ENCODE measurements at regions of chr12 and their contacts with region 1.

Region 1: DNA sequence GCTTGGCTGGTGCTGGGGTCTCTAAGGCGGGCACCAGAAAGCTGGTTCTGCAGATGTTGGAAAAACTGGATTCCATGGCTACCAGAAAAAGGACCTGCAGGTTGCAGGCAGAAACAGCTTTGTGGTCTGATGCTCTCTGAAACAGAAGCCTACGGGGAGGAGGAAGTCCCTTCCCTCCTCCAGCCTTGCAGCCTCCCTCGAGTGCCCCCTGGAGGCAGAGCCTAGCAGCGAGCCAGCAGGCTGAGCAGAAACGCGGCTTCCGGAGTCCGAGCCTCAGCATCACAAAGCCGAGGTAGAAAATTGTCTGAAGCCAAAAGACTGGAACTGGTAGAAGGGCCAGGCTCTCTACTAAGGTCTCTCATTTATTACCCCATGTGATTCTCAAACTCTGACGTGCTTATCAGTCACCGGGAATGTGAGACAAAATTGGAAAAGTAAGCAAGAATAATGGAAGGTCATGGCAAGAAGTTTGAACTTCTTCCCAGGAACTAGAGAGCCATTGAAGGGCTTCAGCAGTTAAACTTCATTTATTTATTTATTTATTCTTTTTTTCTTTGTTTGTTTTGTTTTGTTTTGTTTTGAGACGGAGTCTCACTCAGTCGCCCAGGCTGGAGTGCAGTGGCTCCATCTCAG is 82.2 kb upstream of the CPSF6 start:
- DNase-seq: no peak
- H3K4me3 ChIP-seq: no peak overlapping the region
- H3K27me3 ChIP-seq: no peaks in the 10 kb centered on the region; the same call in 1 of the 2 replicates
- CTCF ChIP-seq: peak; percentile 99

Region 2: DNA sequence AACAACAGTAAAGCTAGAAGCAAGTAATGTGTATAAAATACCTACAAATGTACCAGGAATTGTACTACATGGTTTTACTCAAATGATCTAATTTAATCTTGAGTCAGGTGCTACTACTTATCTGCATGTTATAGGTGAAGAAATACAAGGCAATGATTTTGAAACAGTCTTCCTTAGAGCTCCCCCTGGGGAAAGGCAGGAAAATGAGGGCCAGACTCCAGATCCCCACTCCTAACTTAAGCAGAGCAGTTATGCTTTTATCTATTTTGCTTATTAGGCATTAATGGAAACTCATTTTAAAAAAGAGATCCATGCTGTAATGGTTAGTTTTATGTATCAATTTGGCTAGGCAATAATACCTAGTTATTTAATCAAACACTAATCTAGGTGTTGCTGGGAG is 27.1 kb before region 1 on chr12:
- CTCF ChIA-PET with region 1: interaction called, 19 read pairs
- POLR2A ChIA-PET with region 1: no interaction called
- DNase-seq: no peak
- H3K4me3 ChIP-seq: no peak overlapping the region
- H3K27me3 ChIP-seq: peaks cover 1% of the 10 kb centered on the region; the same call in 1 of the 2 replicates
- CTCF ChIP-seq: peak; percentile 23; the same call in 1 of the 2 replicates

Region 3: GRCh38 chr12:69141074-69141473 is 16.1 kb before region 1 on chr12:
- CTCF ChIA-PET with region 1: interaction called, 36 read pairs
- POLR2A ChIA-PET with region 1: no interaction called
- DNase-seq: no peak
- H3K4me3 ChIP-seq: no peak overlapping the region
- H3K27me3 ChIP-seq: no peaks in the 10 kb centered on the region
- CTCF ChIP-seq: no peak

Region 4: DNA sequence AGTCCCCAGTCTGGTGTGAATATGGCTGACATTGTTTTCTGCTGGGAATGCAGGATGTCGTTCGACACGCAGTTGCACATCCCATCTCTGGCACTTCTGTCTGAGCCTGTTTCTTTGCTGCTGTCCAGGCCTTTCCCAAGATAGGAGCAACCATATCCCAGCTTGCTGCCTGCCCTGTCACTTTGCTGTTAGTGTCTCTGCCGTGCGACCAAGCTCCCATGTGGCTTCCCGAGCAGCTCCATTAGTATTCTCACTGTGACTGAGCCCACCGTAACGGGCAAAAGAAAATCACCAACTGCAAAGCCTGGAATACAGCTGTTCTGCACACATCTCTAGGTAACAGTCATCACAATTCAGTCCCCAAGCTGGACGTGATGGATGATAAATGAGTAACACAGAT is 16.2 kb after region 1 on chr12:
- CTCF ChIA-PET with region 1: interaction called, 50 read pairs
- POLR2A ChIA-PET with region 1: no interaction called
- DNase-seq: no peak
- H3K4me3 ChIP-seq: no peak overlapping the region
- H3K27me3 ChIP-seq: no peaks in the 10 kb centered on the region; the same call in 1 of the 2 replicates
- CTCF ChIP-seq: no peak

Region 5: GRCh38 chr12:69254046-69254445 is 96.9 kb after region 1 on chr12:
- CTCF ChIA-PET with region 1: interaction called, 23 read pairs
- POLR2A ChIA-PET with region 1: no interaction called
- DNase-seq: no peak
- H3K4me3 ChIP-seq: no peak overlapping the region
- H3K27me3 ChIP-seq: no peaks in the 10 kb centered on the region
- CTCF ChIP-seq: peak; percentile 60

Measured in BJ (cell line).